Activated CD4-positive, alpha-beta T cell treated with anti-CD3 and anti-CD28 coated beads, Interleukin-2, amount 10 ng/mL, durations not matched to agents 7 days and 5 days (primary cell): ENCODE measurements at regions of chr19 and their contacts with region 1.

Region 1: DNA sequence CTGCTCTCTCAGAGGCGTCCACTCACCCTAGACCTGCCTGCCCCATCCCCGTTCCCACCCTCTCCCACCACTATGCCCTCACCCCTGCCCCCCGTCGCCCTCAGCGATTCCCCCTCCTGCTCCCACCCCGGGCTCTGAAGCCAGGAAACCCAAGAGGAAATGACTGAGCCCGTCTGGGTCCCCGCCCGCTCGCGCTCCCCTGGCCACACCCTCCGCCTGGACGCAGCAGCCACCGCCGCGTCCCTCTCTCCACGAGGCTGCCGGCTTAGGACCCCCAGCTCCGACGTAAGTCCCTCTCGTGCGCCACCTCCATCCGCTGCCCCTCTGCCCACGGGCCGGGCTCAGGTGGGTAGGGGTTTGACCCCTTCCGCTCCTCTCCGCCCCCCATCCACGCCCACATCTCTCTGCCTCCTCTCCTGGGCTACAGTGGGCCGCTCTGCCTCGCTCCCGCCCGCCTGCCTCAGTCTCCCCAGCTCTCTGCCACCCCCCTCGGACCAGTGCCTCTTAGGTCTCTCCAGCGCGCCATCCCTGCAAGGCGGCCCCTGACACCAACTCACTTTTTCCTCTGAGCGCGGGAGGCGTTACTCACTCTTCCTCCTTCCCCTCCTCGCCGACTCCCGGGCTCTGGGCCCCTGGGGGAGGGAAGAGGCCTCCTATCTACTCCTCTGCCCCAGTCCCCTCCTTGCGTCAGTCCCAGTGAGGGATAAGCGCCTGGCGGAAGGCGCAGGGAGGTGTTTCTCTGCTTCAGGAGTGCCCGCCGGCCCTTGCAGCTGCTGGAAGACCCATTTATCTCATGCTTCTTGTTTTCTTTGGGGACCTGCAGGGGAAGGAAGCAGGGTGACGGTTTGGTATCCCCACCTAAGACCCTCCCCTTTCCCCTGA is at the start of gene FXYD5:
- DNase-seq: peak; percentile 69
- H3K4me3 Mint-ChIP-seq: peak within 1 kb of the TSS; percentile 100
- H3K27ac Mint-ChIP-seq: peak within 1 kb of the TSS; percentile 99
- H3K4me1 Mint-ChIP-seq: peaks cover 59% of the 10 kb centered on the region
- H3K27me3 Mint-ChIP-seq: no peaks in the 10 kb centered on the region
- total RNA-seq, gene FXYD5: 455 to 524 TPM

Region 2: GRCh38 chr19:35140962-35141637 is 13.7 kb before region 1 on chr19:
- CTCF ChIA-PET with region 1: interaction called, 33 read pairs
- POLR2A ChIA-PET with region 1: interaction called, 3 read pairs
- DNase-seq: peak; percentile 96
- H3K4me3 Mint-ChIP-seq: peak overlapping the region; percentile 68
- H3K27ac Mint-ChIP-seq: peak overlapping the region; percentile 85
- H3K4me1 Mint-ChIP-seq: peaks cover 37% of the 10 kb centered on the region
- H3K27me3 Mint-ChIP-seq: peaks cover 20% of the 10 kb centered on the region

Region 3: GRCh38 chr19:35168207-35168606 is 13.4 kb after region 1 on chr19:
- CTCF ChIA-PET with region 1: interaction called, 14 read pairs
- POLR2A ChIA-PET with region 1: no interaction called
- DNase-seq: no peak
- H3K4me3 Mint-ChIP-seq: no peak overlapping the region
- H3K27ac Mint-ChIP-seq: peak overlapping the region; percentile 87
- H3K4me1 Mint-ChIP-seq: peaks cover 51% of the 10 kb centered on the region
- H3K27me3 Mint-ChIP-seq: no peaks in the 10 kb centered on the region

Region 4: DNA sequence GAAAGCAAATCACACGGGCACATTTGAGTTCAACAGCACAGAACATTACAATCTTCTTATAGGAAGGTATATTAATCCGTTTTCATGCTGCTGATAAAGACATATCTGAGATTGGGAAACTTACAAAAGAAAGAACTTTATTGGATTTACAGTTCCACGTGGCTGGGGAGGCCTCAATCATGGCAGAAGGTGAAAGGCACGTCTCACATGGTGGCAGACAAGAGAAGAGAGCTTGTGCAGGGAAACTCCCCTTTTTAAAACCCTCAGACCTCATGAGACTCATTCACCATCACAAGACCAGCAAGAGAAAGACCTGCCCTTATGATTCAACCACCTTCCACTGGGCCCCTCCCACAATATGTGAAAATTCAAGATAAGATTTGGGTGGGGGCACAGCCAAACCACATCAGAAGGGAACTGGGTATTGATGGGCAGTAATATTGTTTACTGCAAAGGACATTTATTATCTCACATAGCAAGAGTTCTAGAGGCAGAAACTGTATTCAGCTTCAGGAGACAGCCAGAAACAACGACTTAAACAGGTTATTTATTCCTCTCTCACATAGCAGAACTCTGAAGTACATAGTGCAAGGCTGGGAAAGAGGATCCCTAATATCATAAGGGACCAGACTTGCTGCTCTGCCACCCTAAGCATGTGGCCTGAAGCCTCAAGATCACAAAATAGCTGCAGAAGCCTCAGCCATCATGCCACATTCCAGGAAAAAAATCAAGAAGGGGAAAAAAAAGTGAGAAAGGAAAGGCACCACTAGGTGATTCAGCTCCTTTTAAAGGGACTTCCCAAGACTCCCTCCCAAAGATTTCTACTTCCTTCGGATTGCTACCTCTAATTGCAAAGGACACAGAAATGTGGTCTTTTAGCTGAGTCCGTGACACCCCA is 22.9 kb after region 1 on chr19:
- CTCF ChIA-PET with region 1: interaction called, 12 read pairs
- POLR2A ChIA-PET with region 1: no interaction called
- DNase-seq: peak; percentile 5
- H3K4me3 Mint-ChIP-seq: no peak overlapping the region
- H3K27ac Mint-ChIP-seq: no peak overlapping the region
- H3K4me1 Mint-ChIP-seq: peaks cover 44% of the 10 kb centered on the region
- H3K27me3 Mint-ChIP-seq: no peaks in the 10 kb centered on the region

Region 5: DNA sequence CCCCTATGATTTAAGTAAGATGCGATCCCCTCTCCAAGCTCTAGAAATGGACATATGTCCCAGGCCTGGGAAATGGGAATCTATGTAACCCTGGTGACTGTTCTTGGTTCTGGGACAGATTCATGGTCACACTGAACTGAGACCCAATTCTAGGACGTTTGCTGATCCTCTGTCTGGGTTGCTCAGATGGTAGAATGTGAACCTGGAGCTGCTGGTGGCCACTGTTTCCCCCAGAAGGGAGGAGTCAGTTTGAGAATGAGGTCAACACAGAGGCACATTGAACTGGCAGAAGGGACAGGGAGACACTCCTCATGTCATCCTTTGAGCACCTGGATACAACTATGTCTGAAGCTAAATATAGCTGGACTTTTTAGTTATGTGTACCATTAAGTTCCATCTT is 44.7 kb after region 1 on chr19:
- CTCF ChIA-PET with region 1: interaction called, 10 read pairs
- POLR2A ChIA-PET with region 1: no interaction called
- DNase-seq: no peak
- H3K4me3 Mint-ChIP-seq: no peak overlapping the region
- H3K27ac Mint-ChIP-seq: no peak overlapping the region
- H3K4me1 Mint-ChIP-seq: peaks cover 38% of the 10 kb centered on the region
- H3K27me3 Mint-ChIP-seq: no peaks in the 10 kb centered on the region